ENCODE measurements at regions of chr15 and their contacts with region 1.

Region 1: DNA sequence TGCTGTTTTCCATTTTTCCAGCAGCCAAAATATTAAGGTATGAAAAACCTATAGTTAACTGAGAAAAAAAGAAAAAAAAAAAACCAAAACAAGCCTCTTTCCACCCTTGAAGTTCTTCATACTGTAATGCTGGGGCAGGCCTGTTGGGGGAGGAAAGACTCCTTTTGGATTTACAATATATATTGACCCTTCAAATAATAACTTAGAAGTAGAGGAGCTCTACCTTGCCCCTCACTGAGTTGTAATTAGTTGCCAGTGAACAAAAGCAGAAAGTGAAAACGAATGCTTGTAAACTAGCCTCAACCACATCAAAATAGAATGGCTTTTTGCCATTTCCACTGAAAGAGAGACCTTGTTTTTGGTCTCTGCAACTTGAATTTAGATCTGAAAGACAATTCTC is 326.6 kb downstream of the NR2F2 start:
- DNase-seq: no peak
- H3K4me3 Mint-ChIP-seq: no peak overlapping the region
- H3K27ac Mint-ChIP-seq: no peak overlapping the region
- H3K4me1 Mint-ChIP-seq: no peaks in the 10 kb centered on the region
- H3K27me3 Mint-ChIP-seq: no peaks in the 10 kb centered on the region
- CTCF ChIP-seq: no peak

Region 2: GRCh38 chr15:96670389-96670788 is 13.3 kb after region 1 on chr15:
- CTCF ChIA-PET with region 1: interaction called, 10 read pairs
- intact Hi-C with region 1: no loop called
- DNase-seq: no peak
- H3K4me3 Mint-ChIP-seq: no peak overlapping the region
- H3K27ac Mint-ChIP-seq: no peak overlapping the region
- H3K4me1 Mint-ChIP-seq: no peaks in the 10 kb centered on the region
- H3K27me3 Mint-ChIP-seq: no peaks in the 10 kb centered on the region
- CTCF ChIP-seq: no peak

Region 3: GRCh38 chr15:96720251-96720650 is 63.2 kb after region 1 on chr15:
- CTCF ChIA-PET with region 1: no interaction called
- intact Hi-C with region 1: no loop called
- DNase-seq: no peak
- H3K4me3 Mint-ChIP-seq: no peak overlapping the region
- H3K27ac Mint-ChIP-seq: no peak overlapping the region
- H3K4me1 Mint-ChIP-seq: peaks cover 9% of the 10 kb centered on the region
- H3K27me3 Mint-ChIP-seq: no peaks in the 10 kb centered on the region
- CTCF ChIP-seq: no peak

Measured in Calu3 (cell line).